ENCODE measurements at regions of chr7 and their contacts with region 1.

Region 1: GRCh38 chr7:151936207-151936606 is 20.0 kb upstream of the GALNTL5 start:
- DNase-seq: peak in 7 of 9 donors; percentile 43 to 78 (median 67)
- ATAC-seq: peak; percentile 83
- H3K4me3 ChIP-seq: peak overlapping the region; percentile 39
- H3K4me3 Mint-ChIP-seq: peak overlapping the region; percentile 67 to 91 (median 80)
- H3K27ac ChIP-seq: peak overlapping the region; percentile 68
- H3K27ac Mint-ChIP-seq: peak overlapping the region; percentile 91 to 99 (median 97)
- H3K4me1 ChIP-seq: peaks cover 8% of the 10 kb centered on the region in 2 donors
- H3K4me1 Mint-ChIP-seq: peaks cover 17 to 40% (median 26%) of the 10 kb centered on the region in 7 donors
- H3K27me3 ChIP-seq: no peaks in the 10 kb centered on the region
- H3K27me3 Mint-ChIP-seq: peaks cover 0 to 27% (median 0%) of the 10 kb centered on the region in 5 donors

Region 2: GRCh38 chr7:151361193-151361959 is 574.8 kb before region 1 on chr7:
- CTCF ChIA-PET with region 1: no interaction called
- POLR2A ChIA-PET with region 1: no interaction called
- intact Hi-C with region 1: no loop called
- DNase-seq: no peak
- ATAC-seq: no peak
- H3K4me3 ChIP-seq: no peak overlapping the region
- H3K4me3 Mint-ChIP-seq: no peak overlapping the region
- H3K27ac ChIP-seq: no peak overlapping the region
- H3K27ac Mint-ChIP-seq: no peak overlapping the region
- H3K4me1 ChIP-seq: no peaks in the 10 kb centered on the region
- H3K4me1 Mint-ChIP-seq: peaks cover 0 to 14% (median 3%) of the 10 kb centered on the region in 7 donors
- H3K27me3 ChIP-seq: no peaks in the 10 kb centered on the region
- H3K27me3 Mint-ChIP-seq: no peaks in the 10 kb centered on the region

Region 3: GRCh38 chr7:151570366-151570915 is 365.8 kb before region 1 on chr7:
- CTCF ChIA-PET with region 1: no interaction called
- POLR2A ChIA-PET with region 1: no interaction called
- intact Hi-C with region 1: loop called in 1 of 2 experiments (anchors 1 kb)
- DNase-seq: peak in 3 of 9 donors; percentile 2 to 12 (median 7)
- ATAC-seq: no peak
- H3K4me3 ChIP-seq: no peak overlapping the region
- H3K4me3 Mint-ChIP-seq: no peak overlapping the region
- H3K27ac ChIP-seq: no peak overlapping the region
- H3K27ac Mint-ChIP-seq: no peak overlapping the region
- H3K4me1 ChIP-seq: no peaks in the 10 kb centered on the region
- H3K4me1 Mint-ChIP-seq: peaks cover 0 to under 1% (median 0%) of the 10 kb centered on the region in 7 donors
- H3K27me3 ChIP-seq: no peaks in the 10 kb centered on the region
- H3K27me3 Mint-ChIP-seq: no peaks in the 10 kb centered on the region

Region 4: GRCh38 chr7:151863386-151864079 is 72.7 kb before region 1 on chr7:
- CTCF ChIA-PET with region 1: interaction called, 4 read pairs
- POLR2A ChIA-PET with region 1: no interaction called
- intact Hi-C with region 1: loop called in 1 of 2 experiments (anchors 1 kb)
- DNase-seq: no peak
- ATAC-seq: peak; percentile 35
- H3K4me3 ChIP-seq: no peak overlapping the region
- H3K4me3 Mint-ChIP-seq: no peak overlapping the region
- H3K27ac ChIP-seq: no peak overlapping the region
- H3K27ac Mint-ChIP-seq: peak overlapping the region in 2 of 9 donors; percentile 41 to 51
- H3K4me1 ChIP-seq: no peaks in the 10 kb centered on the region
- H3K4me1 Mint-ChIP-seq: peaks cover 0 to 48% (median 42%) of the 10 kb centered on the region in 7 donors
- H3K27me3 ChIP-seq: no peaks in the 10 kb centered on the region
- H3K27me3 Mint-ChIP-seq: no peaks in the 10 kb centered on the region

Region 5: GRCh38 chr7:152025077-152025936 is 89.1 kb after region 1 on chr7 and contains the start of gene GALNT11:
- CTCF ChIA-PET with region 1: no interaction called
- POLR2A ChIA-PET with region 1: no interaction called
- intact Hi-C with region 1: loop called (anchors 1 to 2 kb)
- DNase-seq: peak; percentile 82 to 95 (median 91)
- ATAC-seq: peak; percentile 96
- H3K4me3 ChIP-seq: peak within 1 kb of the TSS; percentile 75
- H3K4me3 Mint-ChIP-seq: peak within 1 kb of the TSS; percentile 85 to 92 (median 88)
- H3K27ac ChIP-seq: peak within 1 kb of the TSS; percentile 88
- H3K27ac Mint-ChIP-seq: peak within 1 kb of the TSS; percentile 85 to 96 (median 95)
- H3K4me1 ChIP-seq: peaks cover 7 to 22% of the 10 kb centered on the region in 2 donors
- H3K4me1 Mint-ChIP-seq: peaks cover 12 to 45% (median 39%) of the 10 kb centered on the region in 7 donors
- H3K27me3 ChIP-seq: no peaks in the 10 kb centered on the region
- H3K27me3 Mint-ChIP-seq: peaks cover 0 to 11% (median 0%) of the 10 kb centered on the region in 5 donors
- total RNA-seq, gene GALNT11: 16.0 to 29.5 (median 17.9) TPM

Region 6: GRCh38 chr7:152709287-152710152 is 773.3 kb after region 1 on chr7:
- CTCF ChIA-PET with region 1: no interaction called
- POLR2A ChIA-PET with region 1: no interaction called
- intact Hi-C with region 1: loop called in 1 of 2 experiments (anchors 5 kb)
- DNase-seq: no peak
- ATAC-seq: no peak
- H3K4me3 ChIP-seq: no peak overlapping the region
- H3K4me3 Mint-ChIP-seq: no peak overlapping the region
- H3K27ac ChIP-seq: no peak overlapping the region
- H3K27ac Mint-ChIP-seq: no peak overlapping the region
- H3K4me1 ChIP-seq: no peaks in the 10 kb centered on the region
- H3K4me1 Mint-ChIP-seq: peaks cover 0 to 9% (median 3%) of the 10 kb centered on the region in 7 donors
- H3K27me3 ChIP-seq: no peaks in the 10 kb centered on the region
- H3K27me3 Mint-ChIP-seq: peaks cover 0 to 3% (median 0%) of the 10 kb centered on the region in 5 donors